GM18951 (cell line): ENCODE measurements at regions of chr6 and their contacts with region 1.

Region 1: GRCh38 chr6:38997128-38997761 is 51.3 kb upstream of the GLP1R start:
- POLR2A ChIP-seq: no peak

Region 2: DNA sequence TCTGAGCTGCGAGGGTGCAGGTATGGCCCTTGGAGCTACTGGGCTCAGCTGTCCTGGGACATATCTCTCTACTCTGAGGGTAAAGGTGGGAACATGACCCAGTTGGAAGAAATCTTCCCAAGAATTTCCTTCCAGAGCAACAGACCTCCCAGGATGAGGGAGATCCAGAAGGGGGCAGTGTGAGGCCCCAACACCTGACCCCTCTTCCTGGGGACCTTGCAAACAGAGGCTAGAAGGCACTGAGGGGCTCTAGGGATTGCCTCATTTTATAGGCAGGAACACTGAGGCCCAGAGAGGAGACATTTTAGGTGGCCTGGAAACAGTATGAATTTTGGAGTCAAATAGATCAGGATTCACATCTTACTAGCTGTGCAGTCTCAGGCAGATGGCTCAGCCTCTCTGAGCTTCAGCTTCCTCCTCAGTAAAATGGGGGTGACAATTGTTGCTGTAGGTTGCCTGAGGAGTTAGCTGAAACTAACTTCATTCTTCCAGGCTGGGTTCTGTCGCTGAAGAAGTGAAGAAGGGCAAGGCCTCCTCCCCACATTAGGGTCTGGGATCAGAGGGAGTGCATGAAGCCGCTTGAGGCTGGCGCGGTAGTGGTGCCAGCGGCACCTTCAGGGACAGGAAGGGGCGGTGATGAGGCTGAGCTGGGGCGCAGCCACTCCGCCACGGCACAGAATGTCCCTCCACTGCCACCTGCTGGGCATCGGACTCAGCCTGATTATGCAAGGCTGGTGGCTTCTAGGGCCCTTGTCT is 305.6 kb after region 1 on chr6:
- in situ Hi-C with region 1: loop called (anchors 10 kb)
- POLR2A ChIP-seq: no peak